ENCODE measurements at regions of chr1 and their contacts with region 1.

Region 1: GRCh38 chr1:154961497-154962262 is at the start of gene PYGO2:
- DNase-seq: peak; percentile 62 to 90 (median 80)
- ATAC-seq: peak; percentile 75
- H3K4me3 ChIP-seq: peak within 1 kb of the TSS; percentile 68 to 96
- H3K4me3 Mint-ChIP-seq: peak within 1 kb of the TSS; percentile 91
- H3K27ac ChIP-seq: peak within 1 kb of the TSS; percentile 91 to 95
- H3K27ac Mint-ChIP-seq: peak within 1 kb of the TSS; percentile 93
- H3K4me1 ChIP-seq: peaks cover 27% of the 10 kb centered on the region
- H3K4me1 Mint-ChIP-seq: peaks cover 42% of the 10 kb centered on the region
- H3K27me3 ChIP-seq: no peaks in the 10 kb centered on the region
- H3K27me3 Mint-ChIP-seq: no peaks in the 10 kb centered on the region
- CTCF ChIP-seq: peak; percentile 69
- total RNA-seq, gene PYGO2: 25.1 to 26.7 TPM

Region 2: DNA sequence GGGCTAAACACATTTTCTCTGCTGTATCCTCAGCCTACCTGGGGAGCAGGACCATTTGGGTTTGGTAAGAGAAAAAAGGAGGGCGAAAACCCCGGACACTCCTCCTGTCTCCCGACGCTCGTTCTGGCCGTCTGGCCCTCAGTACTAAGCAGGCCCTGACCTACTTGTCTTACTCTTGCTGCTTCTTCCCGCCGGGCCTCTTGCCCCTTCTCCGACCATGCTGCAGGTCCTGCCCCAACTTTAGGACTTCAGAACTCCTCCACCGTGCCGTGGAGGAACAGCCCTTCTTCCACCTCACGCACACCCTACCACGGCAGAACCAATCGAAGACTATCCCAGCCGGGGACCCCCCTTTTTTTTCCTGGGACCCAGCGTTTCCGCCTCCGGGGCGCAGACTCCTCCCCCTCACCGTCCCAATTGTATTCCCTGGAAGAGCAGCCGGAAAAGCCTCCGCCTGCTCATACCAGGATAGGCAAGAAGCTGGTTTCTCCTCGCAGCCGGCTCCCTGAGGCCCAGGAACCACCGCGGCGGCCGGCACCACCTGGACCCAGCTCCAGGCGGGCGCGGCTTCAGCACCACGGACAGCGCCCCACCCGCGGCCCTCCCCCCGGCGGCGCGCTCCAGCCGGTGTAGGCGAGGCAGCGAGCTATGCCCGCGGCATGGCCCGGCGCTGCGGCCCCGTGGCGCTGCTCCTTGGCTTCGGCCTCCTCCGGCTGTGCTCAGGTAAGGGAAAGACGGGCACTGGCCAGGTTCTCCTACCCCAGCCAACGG is 394.1 kb before region 1 on chr1 and contains the start of gene CHRNB2:
- CTCF ChIA-PET with region 1: no interaction called
- POLR2A ChIA-PET with region 1: no interaction called
- intact Hi-C with region 1: no loop called
- DNase-seq: peak; percentile 52 to 81 (median 65)
- ATAC-seq: peak; percentile 99
- H3K4me3 ChIP-seq: peak within 1 kb of the TSS in 1 of 2 experiments; percentile 46
- H3K4me3 Mint-ChIP-seq: no peak within 1 kb of the TSS
- H3K27ac ChIP-seq: no peak within 1 kb of the TSS
- H3K27ac Mint-ChIP-seq: no peak within 1 kb of the TSS
- H3K4me1 ChIP-seq: peaks cover 7% of the 10 kb centered on the region
- H3K4me1 Mint-ChIP-seq: peaks cover 5% of the 10 kb centered on the region
- H3K27me3 ChIP-seq: peaks cover 6 to 11% of the 10 kb centered on the region in 2 experiments
- H3K27me3 Mint-ChIP-seq: peaks cover 36% of the 10 kb centered on the region
- CTCF ChIP-seq: no peak
- total RNA-seq, gene CHRNB2: not detected

Region 3: DNA sequence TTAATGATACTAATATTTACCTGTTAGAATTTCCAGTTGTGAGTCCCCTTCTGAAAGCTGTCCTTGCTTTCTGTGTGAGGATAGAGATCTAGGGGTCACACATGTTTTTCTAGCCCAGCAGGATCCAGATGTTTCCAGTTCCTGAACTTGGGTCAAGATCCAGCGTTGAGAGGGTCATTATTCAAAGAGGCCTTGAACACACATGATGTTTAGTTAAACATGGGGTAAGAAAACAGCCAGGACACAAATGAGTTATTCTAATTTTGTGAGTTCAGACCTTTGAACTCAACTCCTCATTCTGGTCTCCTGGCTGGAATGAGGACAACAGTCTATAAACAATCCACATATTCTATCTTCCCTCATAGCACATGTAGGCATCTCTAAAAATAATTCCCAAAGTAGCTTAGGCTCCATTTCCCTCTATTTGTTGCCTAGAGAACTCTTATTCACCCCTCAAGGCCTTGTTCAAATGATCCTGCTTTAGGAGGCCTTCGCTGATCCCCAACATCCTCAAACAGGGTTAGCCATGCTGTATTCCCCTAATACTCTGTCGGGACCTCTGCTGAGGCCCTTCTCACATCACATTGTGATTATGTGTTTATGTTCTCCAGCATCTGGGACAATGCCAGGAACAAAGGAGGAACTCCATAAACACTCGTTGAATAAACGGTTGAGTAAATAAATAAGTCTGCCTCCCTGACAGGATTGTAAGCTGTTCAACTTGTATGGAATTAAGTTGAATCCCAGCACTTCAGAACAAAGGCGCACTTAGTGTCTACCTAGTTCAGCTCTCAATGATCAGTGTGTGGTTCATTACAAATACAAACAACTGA is 76.6 kb before region 1 on chr1:
- CTCF ChIA-PET with region 1: no interaction called
- POLR2A ChIA-PET with region 1: no interaction called
- intact Hi-C with region 1: no loop called
- DNase-seq: no peak
- ATAC-seq: no peak
- H3K4me3 ChIP-seq: no peak overlapping the region
- H3K4me3 Mint-ChIP-seq: no peak overlapping the region
- H3K27ac ChIP-seq: no peak overlapping the region
- H3K27ac Mint-ChIP-seq: no peak overlapping the region
- H3K4me1 ChIP-seq: no peaks in the 10 kb centered on the region
- H3K4me1 Mint-ChIP-seq: no peaks in the 10 kb centered on the region
- H3K27me3 ChIP-seq: no peaks in the 10 kb centered on the region
- H3K27me3 Mint-ChIP-seq: no peaks in the 10 kb centered on the region
- CTCF ChIP-seq: no peak

Region 4: GRCh38 chr1:154974063-154974807 is 12.6 kb after region 1 on chr1 and contains the start of gene CKS1B:
- CTCF ChIA-PET with region 1: interaction called, 17 read pairs
- POLR2A ChIA-PET with region 1: interaction called, 10 read pairs
- intact Hi-C with region 1: loop called (anchors 1 kb)
- DNase-seq: peak; percentile 92 to 99 (median 97)
- ATAC-seq: peak; percentile 86
- H3K4me3 ChIP-seq: peak within 1 kb of the TSS; percentile 67
- H3K4me3 Mint-ChIP-seq: no peak within 1 kb of the TSS
- H3K27ac ChIP-seq: peak within 1 kb of the TSS; percentile 90 to 95
- H3K27ac Mint-ChIP-seq: no peak within 1 kb of the TSS
- H3K4me1 ChIP-seq: peaks cover 23% of the 10 kb centered on the region
- H3K4me1 Mint-ChIP-seq: peaks cover 26% of the 10 kb centered on the region
- H3K27me3 ChIP-seq: no peaks in the 10 kb centered on the region
- H3K27me3 Mint-ChIP-seq: no peaks in the 10 kb centered on the region
- CTCF ChIP-seq: no peak
- total RNA-seq, gene CKS1B: 2.3 to 2.9 TPM

Region 5: GRCh38 chr1:154982897-154983648 is 21.4 kb after region 1 on chr1 and contains the start of gene FLAD1:
- CTCF ChIA-PET with region 1: interaction called, 7 read pairs
- POLR2A ChIA-PET with region 1: interaction called, 15 read pairs
- intact Hi-C with region 1: loop called in 1 of 2 experiments (anchors 1 kb)
- DNase-seq: peak; percentile 86 to 99 (median 94)
- ATAC-seq: peak; percentile 98
- H3K4me3 ChIP-seq: peak within 1 kb of the TSS; percentile 57 to 86
- H3K4me3 Mint-ChIP-seq: no peak within 1 kb of the TSS
- H3K27ac ChIP-seq: peak within 1 kb of the TSS; percentile 51 to 82
- H3K27ac Mint-ChIP-seq: no peak within 1 kb of the TSS
- H3K4me1 ChIP-seq: peaks cover 12% of the 10 kb centered on the region
- H3K4me1 Mint-ChIP-seq: peaks cover 12% of the 10 kb centered on the region
- H3K27me3 ChIP-seq: no peaks in the 10 kb centered on the region
- H3K27me3 Mint-ChIP-seq: no peaks in the 10 kb centered on the region
- CTCF ChIP-seq: no peak
- total RNA-seq, gene FLAD1: 17.4 to 19.0 TPM

Region 6: GRCh38 chr1:155050560-155051341 is 89.1 kb after region 1 on chr1 and contains the start of gene ADAM15:
- CTCF ChIA-PET with region 1: no interaction called
- POLR2A ChIA-PET with region 1: no interaction called
- intact Hi-C with region 1: loop called in 1 of 2 experiments (anchors 1 kb)
- DNase-seq: peak; percentile 64 to 88 (median 80)
- ATAC-seq: peak; percentile 83
- H3K4me3 ChIP-seq: peak within 1 kb of the TSS; percentile 86 to 94
- H3K4me3 Mint-ChIP-seq: peak within 1 kb of the TSS; percentile 86
- H3K27ac ChIP-seq: peak within 1 kb of the TSS; percentile 45 to 65
- H3K27ac Mint-ChIP-seq: peak within 1 kb of the TSS; percentile 85
- H3K4me1 ChIP-seq: peaks cover 27% of the 10 kb centered on the region
- H3K4me1 Mint-ChIP-seq: peaks cover 19% of the 10 kb centered on the region
- H3K27me3 ChIP-seq: no peaks in the 10 kb centered on the region
- H3K27me3 Mint-ChIP-seq: no peaks in the 10 kb centered on the region
- CTCF ChIP-seq: peak; percentile 99
- total RNA-seq, gene ADAM15: 10.8 to 11.8 TPM

Region 7: DNA sequence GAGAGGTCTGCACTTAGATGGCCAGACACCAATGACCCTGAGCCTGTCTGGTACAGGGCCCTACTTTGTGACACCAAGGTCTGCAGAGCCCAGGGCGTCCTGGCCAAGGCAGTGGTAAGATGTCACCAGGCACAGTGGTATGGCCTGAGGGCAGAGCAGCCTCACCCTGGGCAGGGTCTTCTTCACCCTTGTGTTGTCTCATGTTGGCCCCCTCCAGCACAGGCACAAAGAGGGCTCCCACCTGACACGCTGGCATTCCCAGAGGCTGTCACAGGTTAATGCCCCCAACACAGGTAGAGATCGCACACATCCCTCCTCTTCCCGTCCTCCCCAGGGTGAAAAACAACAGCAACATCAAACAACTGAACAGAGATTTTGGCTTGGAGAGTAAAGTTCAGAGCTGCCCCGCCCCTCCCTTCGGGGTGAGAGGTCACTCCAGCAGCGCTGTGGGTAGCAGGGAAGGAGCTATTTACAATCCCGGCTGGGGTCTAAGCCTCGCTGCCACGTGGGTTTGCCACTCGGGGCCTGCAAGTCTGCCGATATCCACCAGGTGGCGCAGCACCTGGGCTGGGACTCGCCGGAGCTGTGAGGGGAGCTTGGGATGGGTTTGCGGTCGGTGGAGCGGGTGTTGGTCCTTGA is 129.5 kb after region 1 on chr1:
- CTCF ChIA-PET with region 1: no interaction called
- POLR2A ChIA-PET with region 1: no interaction called
- intact Hi-C with region 1: no loop called
- DNase-seq: peak; percentile 52 to 89 (median 79)
- ATAC-seq: peak; percentile 92
- H3K4me3 ChIP-seq: no peak overlapping the region
- H3K4me3 Mint-ChIP-seq: no peak overlapping the region
- H3K27ac ChIP-seq: no peak overlapping the region
- H3K27ac Mint-ChIP-seq: no peak overlapping the region
- H3K4me1 ChIP-seq: peaks cover 11% of the 10 kb centered on the region
- H3K4me1 Mint-ChIP-seq: peaks cover 8% of the 10 kb centered on the region
- H3K27me3 ChIP-seq: no peaks in the 10 kb centered on the region
- H3K27me3 Mint-ChIP-seq: peaks cover 3% of the 10 kb centered on the region
- CTCF ChIP-seq: peak; percentile 94

Region 8: DNA sequence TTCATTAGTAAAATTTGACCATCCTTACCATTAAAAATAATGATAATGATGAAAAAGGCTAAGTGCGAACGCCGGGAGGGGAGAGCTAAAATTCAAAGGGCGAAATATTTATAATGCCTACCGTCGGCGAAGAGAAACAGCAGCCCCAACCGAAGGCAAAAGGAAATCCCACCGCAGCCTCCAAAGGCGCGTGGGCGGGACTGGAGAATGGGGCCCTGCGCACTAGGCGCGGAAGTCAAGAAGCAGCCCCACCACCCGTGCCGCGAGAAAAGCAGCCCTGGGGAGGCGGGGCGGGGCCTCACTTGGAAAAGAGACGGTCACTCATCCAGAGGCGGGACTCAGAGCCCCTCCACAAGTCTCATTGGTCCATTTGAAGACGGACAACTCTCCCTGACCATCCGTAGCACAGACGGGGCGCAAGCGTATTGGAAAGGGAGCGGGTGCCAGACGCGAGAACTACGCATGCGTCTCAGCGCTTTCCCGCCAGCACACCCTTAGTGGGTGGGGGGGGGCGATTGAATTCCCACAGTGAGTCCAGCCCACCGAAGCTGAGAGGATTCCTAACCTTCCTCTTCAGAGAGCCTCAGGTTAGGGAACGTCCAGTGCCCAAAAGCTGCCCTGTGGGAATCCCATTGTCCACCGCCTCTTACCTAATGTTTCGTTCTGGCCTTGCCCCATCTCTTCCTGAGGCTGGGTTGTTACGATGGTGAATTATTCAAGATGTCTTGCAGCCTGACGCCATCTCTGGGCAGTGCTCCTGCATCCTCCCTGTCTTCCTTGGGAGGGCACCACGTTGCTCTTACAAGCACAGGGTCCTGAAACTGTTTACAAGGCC is 265.8 kb after region 1 on chr1:
- CTCF ChIA-PET with region 1: no interaction called
- POLR2A ChIA-PET with region 1: no interaction called
- intact Hi-C with region 1: loop called in 1 of 2 experiments (anchors 5 kb)
- DNase-seq: peak; percentile 95 to 100 (median 98)
- ATAC-seq: peak; percentile 95
- H3K4me3 ChIP-seq: peak overlapping the region; percentile 71 to 74
- H3K4me3 Mint-ChIP-seq: peak overlapping the region; percentile 88
- H3K27ac ChIP-seq: peak overlapping the region; percentile 70 to 86
- H3K27ac Mint-ChIP-seq: peak overlapping the region; percentile 85
- H3K4me1 ChIP-seq: peaks cover 18% of the 10 kb centered on the region
- H3K4me1 Mint-ChIP-seq: peaks cover 24% of the 10 kb centered on the region
- H3K27me3 ChIP-seq: no peaks in the 10 kb centered on the region
- H3K27me3 Mint-ChIP-seq: no peaks in the 10 kb centered on the region
- CTCF ChIP-seq: no peak

Region 9: DNA sequence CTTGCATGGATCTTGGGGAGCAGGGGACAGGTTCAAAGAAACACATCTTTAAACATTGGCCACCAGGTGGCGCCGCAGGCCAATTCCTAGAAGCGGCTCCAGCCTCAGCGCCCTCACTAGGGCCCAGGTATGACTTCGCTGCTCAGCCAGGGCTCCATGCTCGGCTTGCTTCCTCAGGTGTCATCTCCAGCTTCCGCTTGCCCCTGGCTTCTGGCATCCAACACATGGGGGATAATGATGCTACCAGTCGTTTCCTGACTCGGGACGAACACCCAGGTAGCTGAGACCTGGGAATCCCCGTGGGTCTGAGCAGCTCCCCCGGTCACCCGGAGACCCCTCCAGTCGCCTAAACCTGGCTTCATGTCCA is 1129.1 kb after region 1 on chr1:
- CTCF ChIA-PET with region 1: no interaction called
- POLR2A ChIA-PET with region 1: no interaction called
- intact Hi-C with region 1: no loop called
- DNase-seq: peak; percentile 79 to 95 (median 89)
- ATAC-seq: peak; percentile 98
- H3K4me3 ChIP-seq: no peak overlapping the region
- H3K4me3 Mint-ChIP-seq: no peak overlapping the region
- H3K27ac ChIP-seq: no peak overlapping the region
- H3K27ac Mint-ChIP-seq: no peak overlapping the region
- H3K4me1 ChIP-seq: peaks cover 10% of the 10 kb centered on the region
- H3K4me1 Mint-ChIP-seq: peaks cover 3% of the 10 kb centered on the region
- H3K27me3 ChIP-seq: peaks cover 0 to 3% of the 10 kb centered on the region in 2 experiments
- H3K27me3 Mint-ChIP-seq: peaks cover 18% of the 10 kb centered on the region
- CTCF ChIP-seq: peak; percentile 76

Measured in CD8-positive, alpha-beta T cell (primary cell).